Activated naive CD4-positive, alpha-beta T cell treated with anti-CD3 and anti-CD28 coated beads for 36 hours (primary cell): ENCODE measurements at regions of chr6 and their contacts with region 1.

Region 1: GRCh38 chr6:111483736-111484632 is 966 bp upstream of the REV3L start:
- DNase-seq: peak; percentile 92
- H3K4me3 Mint-ChIP-seq: peak overlapping the region; percentile 97
- H3K27ac Mint-ChIP-seq: peak overlapping the region; percentile 99
- H3K4me1 Mint-ChIP-seq: peaks cover 47% of the 10 kb centered on the region
- H3K27me3 Mint-ChIP-seq: no peaks in the 10 kb centered on the region

Region 2: GRCh38 chr6:110815217-110816109 is 668.5 kb before region 1 on chr6 and contains the start of gene CDK19:
- CTCF ChIA-PET with region 1: no interaction called
- intact Hi-C with region 1: loop called (anchors 1 kb)
- DNase-seq: peak; percentile 99
- H3K4me3 Mint-ChIP-seq: peak within 1 kb of the TSS; percentile 100
- H3K27ac Mint-ChIP-seq: peak within 1 kb of the TSS; percentile 95
- H3K4me1 Mint-ChIP-seq: peaks cover 19% of the 10 kb centered on the region
- H3K27me3 Mint-ChIP-seq: no peaks in the 10 kb centered on the region
- total RNA-seq, gene CDK19: 11.0 to 11.7 TPM

Region 3: DNA sequence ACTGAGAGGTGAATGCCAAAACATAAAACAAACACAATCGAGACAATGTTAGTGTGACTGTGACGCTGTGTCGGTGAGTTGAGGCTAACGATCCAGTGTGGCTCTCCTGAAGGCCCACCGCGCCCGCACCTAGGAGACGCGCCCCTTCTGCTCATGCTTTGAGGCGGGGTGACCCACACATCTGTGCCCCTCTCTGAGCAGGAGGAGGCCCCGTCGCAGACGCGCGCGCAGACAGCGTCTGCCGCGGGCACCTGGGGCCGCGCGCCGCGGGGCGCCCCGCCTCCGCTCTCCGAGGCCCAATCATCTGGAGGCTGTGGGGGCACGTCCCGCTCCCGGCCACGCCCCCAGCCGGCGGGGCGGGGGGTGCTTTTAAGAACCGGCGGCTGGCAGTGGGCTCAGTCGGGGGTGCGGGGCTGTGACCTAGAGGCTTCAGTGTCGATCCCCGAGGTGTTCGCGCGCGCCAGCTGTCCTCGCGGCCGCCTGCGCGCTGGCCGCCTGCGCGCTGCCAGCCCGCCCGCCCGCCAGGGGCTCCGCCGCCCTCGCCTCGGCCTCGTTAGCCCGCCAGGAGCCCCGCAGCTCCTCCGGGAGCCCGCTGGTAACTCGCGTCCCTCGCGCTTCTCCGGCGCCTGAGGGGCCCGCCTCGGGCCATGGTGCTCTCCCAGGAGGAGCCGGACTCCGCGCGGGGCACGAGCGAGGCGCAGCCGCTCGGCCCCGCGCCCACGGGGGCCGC is 396.7 kb before region 1 on chr6 and contains the start of gene SLC16A10:
- CTCF ChIA-PET with region 1: no interaction called
- intact Hi-C with region 1: loop called (anchors 1 kb)
- DNase-seq: peak; percentile 74
- H3K4me3 Mint-ChIP-seq: peak within 1 kb of the TSS; percentile 89
- H3K27ac Mint-ChIP-seq: peak within 1 kb of the TSS; percentile 76
- H3K4me1 Mint-ChIP-seq: peaks cover 36% of the 10 kb centered on the region
- H3K27me3 Mint-ChIP-seq: no peaks in the 10 kb centered on the region
- total RNA-seq, gene SLC16A10: 6.6 to 8.1 TPM

Region 4: GRCh38 chr6:111565326-111566221 is 81.6 kb after region 1 on chr6:
- CTCF ChIA-PET with region 1: interaction called, 5 read pairs
- intact Hi-C with region 1: loop called (anchors 1 kb)
- DNase-seq: peak; percentile 62
- H3K4me3 Mint-ChIP-seq: no peak overlapping the region
- H3K27ac Mint-ChIP-seq: peak overlapping the region; percentile 64
- H3K4me1 Mint-ChIP-seq: peaks cover 49% of the 10 kb centered on the region
- H3K27me3 Mint-ChIP-seq: no peaks in the 10 kb centered on the region

Region 5: GRCh38 chr6:111764238-111765175 is 280.5 kb after region 1 on chr6:
- CTCF ChIA-PET with region 1: no interaction called
- intact Hi-C with region 1: loop called (anchors 5 kb)
- DNase-seq: peak; percentile 84
- H3K4me3 Mint-ChIP-seq: peak overlapping the region; percentile 58
- H3K27ac Mint-ChIP-seq: peak overlapping the region; percentile 97
- H3K4me1 Mint-ChIP-seq: peaks cover 98% of the 10 kb centered on the region
- H3K27me3 Mint-ChIP-seq: no peaks in the 10 kb centered on the region

Region 6: GRCh38 chr6:111861431-111861885 is 377.5 kb after region 1 on chr6:
- CTCF ChIA-PET with region 1: no interaction called
- intact Hi-C with region 1: no loop called
- DNase-seq: peak; percentile 55
- H3K4me3 Mint-ChIP-seq: no peak overlapping the region
- H3K27ac Mint-ChIP-seq: peak overlapping the region; percentile 72
- H3K4me1 Mint-ChIP-seq: peaks cover 99% of the 10 kb centered on the region
- H3K27me3 Mint-ChIP-seq: no peaks in the 10 kb centered on the region

Region 7: GRCh38 chr6:111997078-111997852 is 513.3 kb after region 1 on chr6:
- CTCF ChIA-PET with region 1: interaction called, 5 read pairs
- intact Hi-C with region 1: loop called (anchors 1 kb)
- DNase-seq: peak; percentile 89
- H3K4me3 Mint-ChIP-seq: peak overlapping the region; percentile 53
- H3K27ac Mint-ChIP-seq: peak overlapping the region; percentile 65
- H3K4me1 Mint-ChIP-seq: peaks cover 47% of the 10 kb centered on the region
- H3K27me3 Mint-ChIP-seq: no peaks in the 10 kb centered on the region